H1 (cell line): ENCODE measurements at regions of chr22 and their contacts with region 1.

Region 1: GRCh38 chr22:30920407-30920806 is 48.2 kb downstream of the MORC2 start:
- DNase-seq: peak; percentile 43 to 97
- H3K4me3 ChIP-seq: no peak overlapping the region
- H3K27ac ChIP-seq: no peak overlapping the region
- H3K4me1 ChIP-seq: no peaks in the 10 kb centered on the region
- H3K27me3 ChIP-seq: no peaks in the 10 kb centered on the region
- CTCF ChIP-seq: peak; percentile 77 to 96 (median 88)
- EP300 ChIP-seq: no peak
- POLR2A ChIP-seq: no peak
- RAD21 ChIP-seq: peak; percentile 79 to 80

Region 2: GRCh38 chr22:30905696-30906341 is 14.6 kb before region 1 on chr22:
- CTCF ChIA-PET with region 1: interaction called, 48 read pairs
- POLR2A ChIA-PET with region 1: interaction called, 4 read pairs
- DNase-seq: peak in 1 of 2 experiments; percentile 42
- H3K4me3 ChIP-seq: no peak overlapping the region
- H3K27ac ChIP-seq: no peak overlapping the region
- H3K4me1 ChIP-seq: no peaks in the 10 kb centered on the region
- H3K27me3 ChIP-seq: no peaks in the 10 kb centered on the region
- CTCF ChIP-seq: no peak
- EP300 ChIP-seq: no peak
- POLR2A ChIP-seq: no peak
- RAD21 ChIP-seq: no peak

Region 3: DNA sequence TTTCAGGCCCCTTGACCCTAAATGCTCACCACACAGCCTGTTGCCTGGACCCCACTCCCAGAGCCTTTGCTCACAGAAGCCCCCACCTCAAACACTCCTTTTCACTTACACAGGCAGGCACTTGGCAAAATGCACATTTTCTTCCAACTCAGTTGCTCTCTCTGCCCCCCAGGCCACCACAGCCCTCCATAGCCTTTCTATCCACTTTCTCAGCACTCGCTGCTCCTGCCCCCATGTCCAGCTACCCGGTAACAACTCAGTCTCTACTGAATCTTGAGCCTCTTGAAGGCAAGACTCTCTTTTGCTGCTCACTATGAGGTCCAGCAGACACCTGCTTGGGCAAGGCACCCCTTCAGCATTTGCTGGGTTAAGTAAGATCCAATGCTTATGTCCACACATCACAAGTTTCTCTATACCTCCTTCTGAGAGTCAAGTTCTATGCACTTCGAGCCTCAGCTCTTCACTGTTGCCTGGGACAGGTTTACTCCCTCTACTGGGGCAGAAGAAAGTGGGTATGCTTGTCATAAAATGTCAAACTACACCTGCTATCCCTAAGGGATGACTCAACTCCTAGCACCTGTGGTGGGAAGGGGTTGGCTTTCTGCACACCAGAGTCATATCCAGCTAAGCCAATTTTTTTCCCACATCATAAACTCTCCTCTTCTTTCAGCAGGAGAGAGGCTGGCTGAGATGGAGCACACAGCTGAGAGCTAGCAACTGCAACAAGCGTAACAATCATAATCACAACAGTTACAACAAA is 11.3 kb after region 1 on chr22:
- CTCF ChIA-PET with region 1: interaction called, 21 read pairs
- POLR2A ChIA-PET with region 1: interaction called, 6 read pairs
- DNase-seq: no peak
- H3K4me3 ChIP-seq: no peak overlapping the region
- H3K27ac ChIP-seq: no peak overlapping the region
- H3K4me1 ChIP-seq: no peaks in the 10 kb centered on the region
- H3K27me3 ChIP-seq: no peaks in the 10 kb centered on the region
- CTCF ChIP-seq: no peak
- EP300 ChIP-seq: no peak
- POLR2A ChIP-seq: no peak
- RAD21 ChIP-seq: no peak